ENCODE measurements at regions of chr9 and their contacts with region 1.

Region 1: DNA sequence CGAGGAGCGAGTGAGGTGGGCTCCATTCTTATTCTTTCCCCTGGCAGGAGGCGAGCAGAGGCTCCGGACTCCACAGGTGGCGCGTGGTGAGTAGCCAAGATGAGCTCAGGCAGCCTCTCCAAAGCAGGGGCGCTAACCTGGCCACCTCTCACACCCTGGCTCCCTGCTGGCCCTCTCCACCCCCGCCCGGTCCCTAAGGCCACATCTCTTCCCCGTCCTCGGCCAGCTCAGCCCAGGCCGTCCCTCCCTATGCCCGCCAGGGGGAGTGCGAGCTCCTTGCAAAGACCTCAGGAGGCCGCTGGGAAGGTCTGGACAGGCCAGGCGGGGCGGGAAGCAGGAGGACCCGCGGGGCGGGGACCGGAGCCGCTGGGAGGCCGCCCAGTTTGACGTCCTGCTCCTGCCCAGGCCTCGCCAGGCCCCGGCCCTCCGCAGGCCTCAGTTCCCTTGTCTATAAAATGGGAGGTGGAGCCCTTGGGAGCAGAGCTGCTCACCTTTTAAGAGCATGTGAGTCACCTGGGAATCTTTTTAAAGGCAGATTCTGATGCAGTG is 46.3 kb upstream of the GGTA1 start:
- DNase-seq: peak; percentile 98
- ATAC-seq: peak; percentile 95

Region 2: GRCh38 chr9:121121582-121122087 is 424.3 kb before region 1 on chr9:
- intact Hi-C with region 1: no loop called
- DNase-seq: peak; percentile 99
- ATAC-seq: peak; percentile 100

Region 3: GRCh38 chr9:121222524-121223171 is 323.3 kb before region 1 on chr9:
- intact Hi-C with region 1: no loop called
- DNase-seq: no peak
- ATAC-seq: peak in 1 of 2 donors; percentile 32

Region 4: DNA sequence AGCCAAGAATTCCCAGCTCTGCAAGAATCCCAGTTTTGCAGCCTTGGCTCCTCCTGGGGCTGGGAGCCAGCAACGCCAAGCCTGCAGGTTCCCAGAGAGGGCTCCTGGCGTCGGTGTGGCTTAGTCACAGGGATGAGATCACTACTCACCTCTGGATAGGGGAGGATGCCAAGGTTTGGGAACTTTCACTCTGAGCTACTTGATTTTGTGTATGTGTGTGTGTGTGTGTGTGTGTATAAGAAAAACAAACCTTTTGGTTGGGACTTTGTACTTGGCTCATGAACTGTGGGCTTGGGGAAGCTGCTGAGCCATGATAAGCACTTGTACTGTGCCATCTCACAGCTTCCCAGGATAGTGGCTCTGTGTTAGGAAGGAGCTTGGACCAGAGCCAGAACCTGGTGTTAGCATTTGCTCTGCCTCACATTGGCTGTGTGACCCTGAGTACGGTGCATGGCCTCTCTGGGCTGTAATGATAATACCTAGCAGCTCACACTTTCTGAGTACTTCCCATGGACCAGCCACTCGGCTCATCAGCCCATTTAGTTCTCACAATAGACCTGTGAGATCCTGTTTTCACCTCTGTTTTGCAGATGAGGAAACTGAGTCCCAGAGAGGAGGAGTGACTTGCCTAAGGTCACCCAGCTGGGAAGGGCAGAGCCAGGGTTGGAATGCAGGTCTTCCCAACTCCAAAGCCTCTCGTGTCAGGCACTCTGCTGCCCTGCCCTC is 64.1 kb after region 1 on chr9:
- intact Hi-C with region 1: loop called in 1 of 2 experiments (anchors 10 kb)
- DNase-seq: peak; percentile 79
- ATAC-seq: peak; percentile 61 to 86

Region 5: DNA sequence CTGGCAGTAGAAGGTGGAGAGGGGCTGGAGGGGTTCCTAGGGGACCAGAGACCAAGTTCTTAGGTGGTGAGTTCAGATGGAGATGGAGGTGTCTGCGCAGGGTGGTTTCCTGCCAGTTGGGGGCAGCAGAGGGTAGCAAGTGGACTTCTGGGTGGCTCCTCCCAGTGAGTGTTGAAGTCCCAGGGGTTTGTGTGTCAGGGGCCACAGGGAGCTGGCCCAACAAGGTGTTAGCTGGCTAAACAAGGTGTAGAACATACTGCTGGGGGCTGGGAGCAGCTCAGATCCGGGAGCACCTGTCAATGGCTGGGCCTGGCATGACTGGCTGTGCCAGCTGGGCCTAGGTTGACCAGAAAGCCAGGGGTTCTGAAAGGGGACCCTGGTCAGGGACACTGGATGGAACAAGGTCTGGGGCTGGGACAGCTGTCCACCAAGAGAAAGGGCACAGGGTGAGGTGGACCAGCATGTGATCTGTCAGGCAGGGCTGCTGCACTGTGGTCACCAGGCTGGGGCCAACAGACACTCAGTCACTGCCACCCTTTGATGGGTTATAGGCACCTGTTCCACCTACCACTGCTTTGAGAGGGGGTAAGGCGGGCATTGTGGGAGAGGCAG is 141.1 kb after region 1 on chr9:
- intact Hi-C with region 1: loop called (anchors 5 to 10 kb)
- DNase-seq: peak; percentile 78
- ATAC-seq: peak; percentile 67 to 71

Region 6: GRCh38 chr9:121861501-121862180 is 315.7 kb after region 1 on chr9:
- intact Hi-C with region 1: loop called in 1 of 2 experiments (anchors 10 kb)
- DNase-seq: no peak
- ATAC-seq: peak; percentile 77 to 85

Region 7: GRCh38 chr9:121992571-121993212 is 446.7 kb after region 1 on chr9:
- intact Hi-C with region 1: loop called (anchors 2 to 10 kb)
- DNase-seq: peak; percentile 69
- ATAC-seq: peak; percentile 80 to 88